CD8-positive, alpha-beta T cell (primary cell): ENCODE measurements at regions of chr17 and their contacts with region 1.

Region 1: DNA sequence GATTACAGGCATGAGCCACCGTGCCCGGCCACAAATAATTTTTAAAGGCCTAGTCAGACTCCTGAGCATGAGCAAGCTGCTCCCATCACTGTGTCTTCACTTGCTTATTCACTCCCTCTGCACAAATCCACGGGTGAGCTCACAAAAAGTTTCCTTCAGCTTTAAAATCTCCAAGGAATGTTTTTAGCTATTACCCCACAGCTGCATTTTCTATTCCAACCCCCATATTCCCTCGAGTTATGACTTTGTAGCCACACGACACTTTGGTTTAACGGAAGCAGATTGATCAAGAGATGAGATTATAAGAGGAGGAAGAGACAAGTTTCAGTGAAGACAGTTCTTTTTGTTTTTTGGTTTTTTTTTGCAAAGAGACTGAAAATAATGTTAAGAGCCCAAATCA is 49.1 kb upstream of the SLC25A19 start:
- DNase-seq: peak in 1 of 9 experiments; percentile 57
- ATAC-seq: peak; percentile 45
- H3K4me3 ChIP-seq: peak overlapping the region in 1 of 2 experiments; percentile 5
- H3K4me3 Mint-ChIP-seq: peak overlapping the region; percentile 62
- H3K27ac ChIP-seq: peak overlapping the region; percentile 12 to 73
- H3K27ac Mint-ChIP-seq: peak overlapping the region; percentile 91
- H3K4me1 ChIP-seq: peaks cover 78% of the 10 kb centered on the region
- H3K4me1 Mint-ChIP-seq: peaks cover 78% of the 10 kb centered on the region
- H3K27me3 ChIP-seq: no peaks in the 10 kb centered on the region
- H3K27me3 Mint-ChIP-seq: no peaks in the 10 kb centered on the region
- CTCF ChIP-seq: no peak

Region 2: GRCh38 chr17:75352079-75352569 is 13.8 kb after region 1 on chr17:
- CTCF ChIA-PET with region 1: interaction called, 3 read pairs
- POLR2A ChIA-PET with region 1: interaction called, 3 read pairs
- intact Hi-C with region 1: loop called in 1 of 2 experiments (anchors 2 kb)
- DNase-seq: peak in 1 of 9 experiments; percentile 15
- ATAC-seq: no peak
- H3K4me3 ChIP-seq: no peak overlapping the region
- H3K4me3 Mint-ChIP-seq: no peak overlapping the region
- H3K27ac ChIP-seq: no peak overlapping the region
- H3K27ac Mint-ChIP-seq: peak overlapping the region; percentile 73
- H3K4me1 ChIP-seq: peaks cover 47% of the 10 kb centered on the region
- H3K4me1 Mint-ChIP-seq: peaks cover 73% of the 10 kb centered on the region
- H3K27me3 ChIP-seq: no peaks in the 10 kb centered on the region
- H3K27me3 Mint-ChIP-seq: no peaks in the 10 kb centered on the region
- CTCF ChIP-seq: no peak

Region 3: DNA sequence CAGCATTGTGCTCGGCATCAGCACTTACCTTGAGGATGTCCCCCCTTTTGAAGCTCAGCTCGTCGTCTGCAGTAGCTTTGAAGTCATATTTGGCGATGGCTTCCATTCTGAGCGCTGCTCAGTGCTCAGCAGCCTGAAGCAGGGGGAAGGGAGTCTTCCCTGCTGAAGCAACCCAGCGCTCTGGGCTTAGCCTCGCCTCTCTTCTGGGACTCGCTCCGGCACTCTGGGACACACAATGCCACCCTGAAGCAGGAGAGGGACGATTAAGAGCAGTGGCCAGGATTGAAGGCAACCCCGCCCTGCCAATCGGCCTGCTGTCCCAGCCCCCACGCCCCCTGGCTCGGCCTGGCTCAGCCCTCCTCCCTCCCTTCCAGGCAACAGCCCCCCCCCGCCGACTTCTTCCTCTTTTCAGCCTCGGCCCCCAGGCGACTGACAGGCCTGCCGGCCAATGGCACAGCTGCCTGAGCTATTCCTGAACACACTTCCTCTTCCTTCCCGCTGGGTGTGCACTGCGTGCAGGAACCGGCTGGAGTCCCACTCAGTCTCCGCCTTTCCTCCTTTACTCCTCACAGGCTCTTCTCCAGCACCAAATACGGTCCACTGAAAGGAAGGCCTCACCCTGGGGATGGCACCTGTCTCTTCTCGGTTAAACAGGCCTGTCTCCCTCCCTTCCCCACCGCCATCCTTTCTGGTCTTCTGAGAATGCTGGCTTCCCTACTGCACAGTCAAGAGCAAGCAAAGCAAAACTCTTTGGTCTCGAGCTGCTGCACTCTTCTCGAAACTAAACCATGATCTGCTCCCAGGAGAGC is 55.4 kb after region 1 on chr17:
- CTCF ChIA-PET with region 1: interaction called, 4 read pairs
- POLR2A ChIA-PET with region 1: interaction called, 10 read pairs
- intact Hi-C with region 1: no loop called
- DNase-seq: peak; percentile 47 to 92 (median 83)
- ATAC-seq: peak; percentile 84
- H3K4me3 ChIP-seq: peak overlapping the region; percentile 49 to 53
- H3K4me3 Mint-ChIP-seq: peak overlapping the region; percentile 94
- H3K27ac ChIP-seq: peak overlapping the region; percentile 3 to 63
- H3K27ac Mint-ChIP-seq: peak overlapping the region; percentile 90
- H3K4me1 ChIP-seq: peaks cover 55% of the 10 kb centered on the region
- H3K4me1 Mint-ChIP-seq: peaks cover 78% of the 10 kb centered on the region
- H3K27me3 ChIP-seq: no peaks in the 10 kb centered on the region
- H3K27me3 Mint-ChIP-seq: no peaks in the 10 kb centered on the region
- CTCF ChIP-seq: no peak